Panc1 (cell line): ENCODE measurements at regions of chr9 and their contacts with region 1.

Region 1: GRCh38 chr9:121944716-121945191 is 148.4 kb downstream of the TTLL11 start:
- DNase-seq: no peak
- ATAC-seq: no peak
- H3K4me3 ChIP-seq: no peak overlapping the region
- H3K27ac ChIP-seq: no peak overlapping the region
- H3K4me1 ChIP-seq: no peaks in the 10 kb centered on the region
- H3K27me3 ChIP-seq: no peaks in the 10 kb centered on the region
- CTCF ChIP-seq: no peak

Region 2: GRCh38 chr9:121405899-121406298 is 538.9 kb before region 1 on chr9:
- CTCF ChIA-PET with region 1: interaction called, 15 read pairs
- POLR2A ChIA-PET with region 1: no interaction called
- in situ Hi-C with region 1: no loop called
- intact Hi-C with region 1: no loop called
- DNase-seq: no peak
- ATAC-seq: no peak
- H3K4me3 ChIP-seq: no peak overlapping the region
- H3K27ac ChIP-seq: no peak overlapping the region
- H3K4me1 ChIP-seq: no peaks in the 10 kb centered on the region
- H3K27me3 ChIP-seq: no peaks in the 10 kb centered on the region; the same call in 1 of the 2 replicates
- CTCF ChIP-seq: no peak

Region 3: GRCh38 chr9:121963528-121963995 is 18.8 kb after region 1 on chr9:
- CTCF ChIA-PET with region 1: no interaction called
- POLR2A ChIA-PET with region 1: no interaction called
- in situ Hi-C with region 1: no loop called
- intact Hi-C with region 1: no loop called
- DNase-seq: no peak
- ATAC-seq: no peak
- H3K4me3 ChIP-seq: no peak overlapping the region; a peak in 1 of 4 replicates
- H3K27ac ChIP-seq: no peak overlapping the region
- H3K4me1 ChIP-seq: no peaks in the 10 kb centered on the region
- H3K27me3 ChIP-seq: no peaks in the 10 kb centered on the region
- CTCF ChIP-seq: no peak